Right ventricle myocardium inferior (tissue), 1 donor: ENCODE measurements at regions of chr2 and their contacts with region 1.

Region 1: DNA sequence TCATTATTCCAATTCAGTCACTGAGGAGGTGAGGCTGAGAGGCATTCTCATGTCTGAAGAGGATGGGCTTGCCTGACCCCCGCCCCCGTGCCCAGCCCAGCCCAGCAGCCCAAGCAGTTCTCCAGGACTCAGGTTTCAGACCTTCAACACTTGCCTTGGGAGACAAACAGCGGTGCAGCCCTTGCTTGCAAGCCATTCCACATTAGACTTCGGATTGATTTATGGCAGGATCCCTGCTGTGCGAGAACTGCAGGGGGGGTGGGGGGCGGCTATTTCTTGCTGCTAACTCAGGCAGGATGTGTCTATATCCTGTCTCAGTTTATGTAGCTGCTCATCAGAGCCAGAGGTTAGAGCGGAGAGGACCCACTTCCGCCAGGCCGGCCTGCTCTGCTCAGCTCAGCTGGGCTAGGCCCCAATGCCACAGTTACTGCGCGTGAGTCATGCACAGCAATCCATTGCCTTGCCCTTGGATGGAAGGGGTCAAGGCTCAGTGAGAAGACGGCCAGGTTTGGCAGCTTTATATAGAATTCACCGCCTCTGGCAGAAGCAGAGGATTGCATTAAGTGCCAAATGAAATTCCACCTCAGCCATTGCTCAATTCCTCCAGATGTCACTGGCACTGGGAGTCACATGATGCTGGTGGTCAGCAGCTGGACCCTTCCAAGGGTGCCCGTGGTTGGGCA is 1.8 kb downstream of the GYPC start:
- DNase-seq: peak; percentile 88
- ATAC-seq: peak; percentile 76

Region 2: DNA sequence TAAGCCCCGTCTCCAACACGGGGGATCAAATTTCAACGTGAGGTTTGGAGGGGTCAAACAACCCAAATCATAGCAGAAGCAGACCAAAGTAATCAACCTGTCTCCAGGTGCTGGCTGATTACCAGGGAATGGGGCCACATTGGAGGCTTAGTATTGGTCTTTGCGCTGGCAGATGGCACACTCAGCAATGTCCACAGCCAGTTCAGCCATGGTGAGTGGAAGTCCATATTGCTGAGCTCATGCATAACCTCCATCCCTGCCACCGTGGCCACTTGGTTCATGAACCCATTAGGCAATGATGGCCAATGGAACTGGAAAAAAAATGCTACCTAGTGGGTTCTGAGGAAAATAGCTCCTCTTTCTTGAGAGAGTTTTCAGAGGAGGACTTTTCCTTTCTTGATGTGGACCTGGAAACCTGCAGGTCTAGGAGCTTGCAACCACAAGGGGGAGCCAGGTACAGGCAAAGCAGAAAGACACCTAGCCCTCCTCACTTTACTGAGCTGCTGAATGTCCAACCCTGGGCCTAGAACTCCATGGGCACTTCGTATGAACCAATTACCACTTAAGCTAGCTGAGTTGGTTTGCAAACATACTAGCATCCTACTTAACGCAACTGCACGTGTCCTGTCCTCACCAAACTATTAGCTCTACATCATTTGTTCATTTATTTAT is 129.8 kb before region 1 on chr2:
- intact Hi-C with region 1: loop called (anchors 5 kb)
- DNase-seq: no peak
- ATAC-seq: peak; percentile 78

Region 3: DNA sequence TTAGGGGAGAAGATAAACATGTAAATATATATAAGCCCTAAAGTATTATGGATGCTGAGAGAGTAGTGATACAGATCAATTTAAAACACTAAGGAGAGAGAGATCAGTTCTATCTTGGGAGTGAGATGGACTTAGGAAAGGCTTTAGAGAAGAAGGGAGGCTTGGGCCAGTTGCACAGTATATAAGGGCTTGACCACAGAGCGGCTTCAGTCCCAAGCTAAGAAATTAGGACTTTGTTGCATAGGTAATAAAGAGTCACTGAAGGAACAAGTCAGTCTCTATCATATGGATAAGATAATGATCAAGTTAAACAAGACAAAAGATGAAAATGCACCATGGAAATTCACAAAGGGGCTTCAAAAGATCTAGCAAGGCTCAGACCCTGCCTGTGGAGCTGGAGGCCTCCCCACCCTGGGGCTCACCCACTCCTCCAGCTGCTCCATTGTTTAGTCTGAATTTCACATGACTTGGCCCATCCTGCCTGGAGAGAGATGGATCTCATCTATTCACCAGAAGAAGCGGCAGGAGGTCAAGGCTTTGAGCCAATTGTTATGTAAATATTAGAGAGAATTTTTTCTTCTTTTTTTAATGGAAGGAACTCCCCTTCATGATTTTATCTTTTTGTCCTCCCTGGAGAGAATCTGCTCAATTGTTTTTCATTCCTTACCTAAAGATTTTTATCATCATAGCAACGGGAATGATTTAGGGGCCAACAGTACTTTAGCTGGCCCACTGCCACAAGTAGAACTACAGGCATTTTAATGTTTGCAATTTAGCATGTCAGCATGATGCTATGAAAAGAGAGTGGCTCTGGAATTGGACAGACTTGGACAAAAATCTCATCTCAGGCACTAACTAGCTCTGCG is 42.2 kb after region 1 on chr2:
- intact Hi-C with region 1: loop called (anchors 2 kb)
- DNase-seq: no peak
- ATAC-seq: no peak

Region 4: GRCh38 chr2:126831234-126832005 is 173.6 kb after region 1 on chr2:
- intact Hi-C with region 1: no loop called
- DNase-seq: no peak
- ATAC-seq: no peak